ENCODE measurements at regions of chr2 and their contacts with region 1.

Region 1: GRCh38 chr2:190535586-190535985 is 1.1 kb upstream of the NEMP2 start:
- DNase-seq: no peak
- ATAC-seq: no peak
- H3K4me3 ChIP-seq: peak overlapping the region in 1 of 2 donors; percentile 88
- H3K4me3 Mint-ChIP-seq: peak overlapping the region; percentile 55 to 90 (median 62)
- H3K27ac ChIP-seq: peak overlapping the region; percentile 99
- H3K27ac Mint-ChIP-seq: peak overlapping the region; percentile 75 to 95
- H3K4me1 ChIP-seq: peaks cover 27 to 37% of the 10 kb centered on the region in 2 experiments
- H3K4me1 Mint-ChIP-seq: peaks cover 46 to 49% (median 48%) of the 10 kb centered on the region in 3 donors
- H3K27me3 ChIP-seq: no peaks in the 10 kb centered on the region
- H3K27me3 Mint-ChIP-seq: no peaks in the 10 kb centered on the region

Region 2: GRCh38 chr2:190408538-190409271 is 126.9 kb before region 1 on chr2:
- CTCF ChIA-PET with region 1: no interaction called
- POLR2A ChIA-PET with region 1: interaction called, 9 to 11 read pairs
- DNase-seq: peak; percentile 63 to 88 (median 79)
- ATAC-seq: peak; percentile 59 to 80 (median 75)
- H3K4me3 ChIP-seq: peak overlapping the region; percentile 83 to 85
- H3K4me3 Mint-ChIP-seq: peak overlapping the region; percentile 87 to 88 (median 87)
- H3K27ac ChIP-seq: peak overlapping the region; percentile 96
- H3K27ac Mint-ChIP-seq: peak overlapping the region; percentile 94 to 96
- H3K4me1 ChIP-seq: peaks cover 31 to 36% of the 10 kb centered on the region in 2 experiments
- H3K4me1 Mint-ChIP-seq: peaks cover 48 to 53% (median 53%) of the 10 kb centered on the region in 3 donors
- H3K27me3 ChIP-seq: peaks cover 0 to 2% of the 10 kb centered on the region in 2 experiments
- H3K27me3 Mint-ChIP-seq: no peaks in the 10 kb centered on the region

Measured in T-cell (primary cell).